ENCODE measurements at regions of chr5 and their contacts with region 1.

Region 1: DNA sequence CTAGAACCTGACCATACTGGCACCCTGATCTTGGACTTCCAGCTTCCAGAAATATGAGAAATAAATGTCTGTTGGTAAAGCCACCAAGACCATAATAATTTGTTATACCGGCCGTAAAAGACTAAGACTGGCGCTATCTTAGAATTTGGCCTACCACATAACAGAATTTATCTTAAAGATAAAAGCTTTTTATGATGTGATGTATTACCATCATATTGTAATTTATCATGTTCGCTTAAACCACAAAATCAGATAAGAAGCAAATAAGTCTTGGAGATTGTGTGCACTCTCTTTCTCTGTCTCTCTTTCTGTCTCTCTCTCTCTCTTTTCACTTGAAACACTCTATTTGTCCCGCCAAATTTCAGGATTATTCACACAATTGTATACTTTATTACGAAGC is 35.6 kb downstream of the FST start:
- DNase-seq: no peak
- H3K4me3 Mint-ChIP-seq: no peak overlapping the region
- H3K27ac Mint-ChIP-seq: no peak overlapping the region
- H3K4me1 Mint-ChIP-seq: no peaks in the 10 kb centered on the region
- H3K27me3 Mint-ChIP-seq: no peaks in the 10 kb centered on the region
- CTCF ChIP-seq: no peak

Region 2: GRCh38 chr5:53233652-53234405 is 282.2 kb before region 1 on chr5:
- CTCF ChIA-PET with region 1: no interaction called
- intact Hi-C with region 1: no loop called
- DNase-seq: no peak
- H3K4me3 Mint-ChIP-seq: no peak overlapping the region
- H3K27ac Mint-ChIP-seq: no peak overlapping the region
- H3K4me1 Mint-ChIP-seq: no peaks in the 10 kb centered on the region
- H3K27me3 Mint-ChIP-seq: no peaks in the 10 kb centered on the region
- CTCF ChIP-seq: no peak

Region 3: DNA sequence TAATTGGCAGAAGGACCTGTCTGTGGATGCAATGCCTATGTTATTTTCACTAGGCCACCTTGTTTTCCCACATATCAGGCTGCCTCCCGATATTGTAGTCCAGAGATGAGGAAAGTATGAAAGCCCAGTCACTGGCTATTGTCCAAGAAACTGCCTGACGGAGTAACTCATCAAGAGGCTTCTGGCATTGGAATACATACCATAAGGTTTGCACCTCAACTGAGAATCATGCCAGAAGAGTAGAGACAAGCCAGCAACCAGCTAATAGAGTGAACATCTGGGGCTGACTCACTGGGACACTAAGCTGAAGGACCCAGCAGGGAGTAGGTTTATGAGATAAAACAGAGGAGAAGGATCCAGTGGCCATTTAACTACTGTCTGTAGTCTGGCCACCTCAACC is 172.8 kb before region 1 on chr5:
- CTCF ChIA-PET with region 1: no interaction called
- intact Hi-C with region 1: no loop called
- DNase-seq: no peak
- H3K4me3 Mint-ChIP-seq: no peak overlapping the region
- H3K27ac Mint-ChIP-seq: no peak overlapping the region
- H3K4me1 Mint-ChIP-seq: peaks cover 25% of the 10 kb centered on the region
- H3K27me3 Mint-ChIP-seq: no peaks in the 10 kb centered on the region
- CTCF ChIP-seq: no peak

Region 4: GRCh38 chr5:53749621-53750020 is 233.6 kb after region 1 on chr5:
- CTCF ChIA-PET with region 1: no interaction called
- intact Hi-C with region 1: loop called (anchors 5 kb)
- DNase-seq: no peak
- H3K4me3 Mint-ChIP-seq: no peak overlapping the region
- H3K27ac Mint-ChIP-seq: no peak overlapping the region
- H3K4me1 Mint-ChIP-seq: no peaks in the 10 kb centered on the region
- H3K27me3 Mint-ChIP-seq: peaks cover 18% of the 10 kb centered on the region
- CTCF ChIP-seq: no peak

Measured in Calu3 (cell line).